ENCODE measurements at regions of chr17 and their contacts with region 1.

Region 1: DNA sequence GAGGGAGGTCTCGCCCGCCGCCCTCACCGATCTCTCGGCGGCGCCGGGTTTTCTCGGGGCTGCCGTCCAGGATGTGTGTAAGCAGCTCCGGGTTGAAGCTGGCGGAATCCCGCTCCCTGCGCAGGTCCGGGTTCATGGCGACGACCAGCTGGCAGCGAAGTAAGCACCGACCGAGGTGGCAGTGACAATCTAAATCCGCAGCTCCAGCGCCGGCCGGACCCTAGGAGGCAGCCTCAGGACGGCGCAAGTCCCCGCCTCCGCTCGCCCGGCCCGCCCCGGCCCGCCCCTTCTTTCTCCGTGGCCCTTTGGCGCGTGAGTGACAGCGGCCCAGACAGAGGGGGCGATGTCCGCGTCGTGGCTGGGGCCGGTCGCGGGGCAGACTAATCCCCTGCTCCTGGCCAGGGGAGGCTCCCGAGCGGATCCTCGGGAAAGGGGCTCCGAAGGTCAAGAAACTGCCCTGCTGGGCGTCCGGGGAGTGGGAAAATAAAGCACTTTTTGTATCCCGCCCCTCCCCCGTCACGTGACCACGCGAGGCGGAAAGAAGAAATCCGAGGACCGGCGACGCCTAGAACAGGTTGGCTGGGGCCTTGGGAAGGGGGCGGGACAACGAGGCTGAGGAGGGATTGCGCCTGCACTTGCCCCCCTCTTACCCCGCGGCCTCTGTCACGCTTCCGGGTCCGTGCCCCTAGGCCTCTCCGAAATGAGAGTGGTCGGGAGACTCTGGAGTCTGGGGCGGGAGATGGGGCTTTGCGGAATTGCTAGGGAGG is at the starts of genes ACOX1 and TEN1:
- DNase-seq: peak; percentile 90 to 98 (median 96)
- ATAC-seq: peak; percentile 97
- H3K4me3 ChIP-seq: peak within 1 kb of the TSS; percentile 85 to 93
- H3K4me3 Mint-ChIP-seq: peak within 1 kb of the TSS; percentile 99
- H3K27ac ChIP-seq: peak within 1 kb of the TSS; percentile 97 to 99
- H3K27ac Mint-ChIP-seq: peak within 1 kb of the TSS; percentile 100
- H3K4me1 ChIP-seq: peaks cover 15% of the 10 kb centered on the region
- H3K4me1 Mint-ChIP-seq: peaks cover 38% of the 10 kb centered on the region
- H3K27me3 ChIP-seq: no peaks in the 10 kb centered on the region
- H3K27me3 Mint-ChIP-seq: no peaks in the 10 kb centered on the region
- CTCF ChIP-seq: no peak
- total RNA-seq, gene ACOX1: 18.2 to 20.4 TPM
- total RNA-seq, gene TEN1: 14.6 to 17.1 TPM

Region 2: GRCh38 chr17:75667021-75667790 is 311.9 kb before region 1 on chr17 and contains the starts of genes RECQL5 and SAP30BP:
- CTCF ChIA-PET with region 1: no interaction called
- POLR2A ChIA-PET with region 1: no interaction called
- intact Hi-C with region 1: loop called in 1 of 2 experiments (anchors 2 kb)
- DNase-seq: peak; percentile 95 to 99 (median 98)
- ATAC-seq: peak; percentile 100
- H3K4me3 ChIP-seq: peak within 1 kb of the TSS; percentile 78 to 85
- H3K4me3 Mint-ChIP-seq: peak within 1 kb of the TSS; percentile 58
- H3K27ac ChIP-seq: peak within 1 kb of the TSS; percentile 88 to 96
- H3K27ac Mint-ChIP-seq: no peak within 1 kb of the TSS
- H3K4me1 ChIP-seq: peaks cover 18% of the 10 kb centered on the region
- H3K4me1 Mint-ChIP-seq: peaks cover 33% of the 10 kb centered on the region
- H3K27me3 ChIP-seq: no peaks in the 10 kb centered on the region
- H3K27me3 Mint-ChIP-seq: no peaks in the 10 kb centered on the region
- CTCF ChIP-seq: no peak
- total RNA-seq, gene RECQL5: 11.2 to 13.2 TPM
- total RNA-seq, gene SAP30BP: 303 to 305 TPM

Region 3: DNA sequence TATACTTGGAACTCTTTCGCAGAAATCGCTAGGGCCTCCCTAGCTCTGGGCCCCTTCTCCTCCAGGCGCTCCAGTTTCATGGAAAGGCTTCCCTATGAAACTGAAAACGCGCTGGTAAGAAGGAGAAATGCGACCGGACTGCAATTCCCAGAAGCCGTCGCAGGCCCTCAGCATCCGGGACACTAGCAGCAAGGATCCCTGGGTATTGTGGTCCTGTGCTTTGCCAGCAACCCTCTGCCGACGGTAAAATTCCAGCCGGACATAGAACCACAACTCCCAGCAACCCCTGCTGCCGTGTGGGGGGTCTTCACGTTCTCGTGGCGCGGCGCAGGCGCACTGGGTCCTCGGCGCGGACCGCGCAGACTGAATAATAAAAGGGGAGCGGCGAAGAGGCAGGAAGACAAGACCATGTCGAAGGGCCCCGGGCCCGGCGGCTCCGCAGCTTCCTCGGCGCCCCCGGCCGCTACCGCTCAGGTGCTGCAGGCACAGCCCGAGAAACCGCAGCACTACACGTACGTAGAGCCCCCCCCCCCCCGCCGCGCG is 194.6 kb before region 1 on chr17 and contains the start of gene UNK:
- CTCF ChIA-PET with region 1: no interaction called
- POLR2A ChIA-PET with region 1: interaction called, 3 read pairs
- intact Hi-C with region 1: loop called (anchors 1 kb)
- DNase-seq: peak; percentile 91 to 99 (median 96)
- ATAC-seq: peak; percentile 64
- H3K4me3 ChIP-seq: peak within 1 kb of the TSS; percentile 57 to 78
- H3K4me3 Mint-ChIP-seq: peak within 1 kb of the TSS; percentile 93
- H3K27ac ChIP-seq: peak within 1 kb of the TSS; percentile 95 to 100
- H3K27ac Mint-ChIP-seq: peak within 1 kb of the TSS; percentile 98
- H3K4me1 ChIP-seq: peaks cover 39% of the 10 kb centered on the region
- H3K4me1 Mint-ChIP-seq: peaks cover 49% of the 10 kb centered on the region
- H3K27me3 ChIP-seq: no peaks in the 10 kb centered on the region
- H3K27me3 Mint-ChIP-seq: no peaks in the 10 kb centered on the region
- CTCF ChIP-seq: no peak
- total RNA-seq, gene UNK: 37.3 to 42.8 TPM

Region 4: GRCh38 chr17:75917141-75917916 is 61.8 kb before region 1 on chr17:
- CTCF ChIA-PET with region 1: no interaction called
- POLR2A ChIA-PET with region 1: no interaction called
- intact Hi-C with region 1: no loop called
- DNase-seq: no peak
- ATAC-seq: no peak
- H3K4me3 ChIP-seq: no peak overlapping the region
- H3K4me3 Mint-ChIP-seq: no peak overlapping the region
- H3K27ac ChIP-seq: no peak overlapping the region
- H3K27ac Mint-ChIP-seq: peak overlapping the region; percentile 74
- H3K4me1 ChIP-seq: no peaks in the 10 kb centered on the region
- H3K4me1 Mint-ChIP-seq: peaks cover 3% of the 10 kb centered on the region
- H3K27me3 ChIP-seq: no peaks in the 10 kb centered on the region
- H3K27me3 Mint-ChIP-seq: no peaks in the 10 kb centered on the region
- CTCF ChIP-seq: no peak

Region 5: GRCh38 chr17:75940724-75941441 is 38.2 kb before region 1 on chr17 and contains the start of gene FBF1:
- CTCF ChIA-PET with region 1: no interaction called
- POLR2A ChIA-PET with region 1: interaction called, 5 read pairs
- intact Hi-C with region 1: loop called (anchors 1 kb)
- DNase-seq: peak; percentile 64 to 92 (median 84)
- ATAC-seq: peak; percentile 99
- H3K4me3 ChIP-seq: peak within 1 kb of the TSS; percentile 61 to 84
- H3K4me3 Mint-ChIP-seq: peak within 1 kb of the TSS; percentile 91
- H3K27ac ChIP-seq: peak within 1 kb of the TSS; percentile 49 to 72
- H3K27ac Mint-ChIP-seq: peak within 1 kb of the TSS; percentile 86
- H3K4me1 ChIP-seq: peaks cover 15% of the 10 kb centered on the region
- H3K4me1 Mint-ChIP-seq: peaks cover 13% of the 10 kb centered on the region
- H3K27me3 ChIP-seq: no peaks in the 10 kb centered on the region
- H3K27me3 Mint-ChIP-seq: no peaks in the 10 kb centered on the region
- CTCF ChIP-seq: no peak
- total RNA-seq, gene FBF1: 18.6 to 21.1 TPM

Region 6: DNA sequence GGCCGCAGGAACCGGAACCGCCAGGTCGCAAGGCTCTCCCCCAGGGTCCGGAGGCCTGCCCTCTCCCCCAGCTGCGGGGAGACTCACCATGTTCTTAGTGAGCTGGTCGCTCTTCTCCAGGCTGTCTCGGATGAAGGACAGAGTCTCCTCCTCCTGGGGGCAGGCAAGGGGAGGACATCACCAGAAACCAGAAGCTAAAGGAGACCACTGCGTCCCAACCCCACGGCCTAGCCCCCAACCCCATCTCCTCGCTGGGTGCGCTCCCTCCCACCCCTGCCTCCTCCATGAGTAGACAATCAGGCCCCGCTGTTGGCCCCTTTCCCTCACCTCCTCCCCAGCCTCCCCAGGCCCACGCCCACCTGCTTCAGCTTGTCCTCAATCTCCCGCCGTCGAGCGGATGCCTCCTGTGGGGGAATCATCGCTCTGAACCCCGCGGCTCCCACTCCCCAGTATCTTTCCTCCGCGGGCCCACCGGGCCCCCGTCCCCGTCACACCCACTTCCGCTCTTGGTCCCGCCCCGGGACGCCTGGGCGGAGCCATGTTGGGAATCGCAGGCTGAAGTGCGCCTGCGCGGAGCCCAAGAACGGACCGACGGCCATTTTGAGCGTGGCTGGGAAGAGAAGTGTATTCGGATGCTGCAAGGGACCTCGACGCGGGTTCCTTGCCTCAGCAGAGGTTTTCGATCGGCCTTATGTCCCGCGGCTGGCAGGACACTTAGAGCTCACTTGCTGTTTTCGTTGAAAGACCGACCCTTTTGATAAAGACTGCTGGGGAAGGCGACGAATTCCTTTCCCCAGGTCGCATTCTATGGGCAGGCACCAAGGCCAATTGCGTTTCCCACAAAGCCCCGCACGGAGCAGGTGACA is 124.4 kb after region 1 on chr17 and contains the start of gene EXOC7:
- CTCF ChIA-PET with region 1: no interaction called
- POLR2A ChIA-PET with region 1: no interaction called
- intact Hi-C with region 1: loop called in 1 of 2 experiments (anchors 1 kb)
- DNase-seq: peak; percentile 83 to 97 (median 93)
- ATAC-seq: peak; percentile 93
- H3K4me3 ChIP-seq: peak within 1 kb of the TSS; percentile 74 to 75
- H3K4me3 Mint-ChIP-seq: peak within 1 kb of the TSS; percentile 98
- H3K27ac ChIP-seq: peak within 1 kb of the TSS; percentile 61 to 77
- H3K27ac Mint-ChIP-seq: peak within 1 kb of the TSS; percentile 95
- H3K4me1 ChIP-seq: peaks cover 21% of the 10 kb centered on the region
- H3K4me1 Mint-ChIP-seq: peaks cover 29% of the 10 kb centered on the region
- H3K27me3 ChIP-seq: no peaks in the 10 kb centered on the region
- H3K27me3 Mint-ChIP-seq: no peaks in the 10 kb centered on the region
- CTCF ChIP-seq: no peak
- total RNA-seq, gene EXOC7: 97.3 to 101 TPM

Region 7: DNA sequence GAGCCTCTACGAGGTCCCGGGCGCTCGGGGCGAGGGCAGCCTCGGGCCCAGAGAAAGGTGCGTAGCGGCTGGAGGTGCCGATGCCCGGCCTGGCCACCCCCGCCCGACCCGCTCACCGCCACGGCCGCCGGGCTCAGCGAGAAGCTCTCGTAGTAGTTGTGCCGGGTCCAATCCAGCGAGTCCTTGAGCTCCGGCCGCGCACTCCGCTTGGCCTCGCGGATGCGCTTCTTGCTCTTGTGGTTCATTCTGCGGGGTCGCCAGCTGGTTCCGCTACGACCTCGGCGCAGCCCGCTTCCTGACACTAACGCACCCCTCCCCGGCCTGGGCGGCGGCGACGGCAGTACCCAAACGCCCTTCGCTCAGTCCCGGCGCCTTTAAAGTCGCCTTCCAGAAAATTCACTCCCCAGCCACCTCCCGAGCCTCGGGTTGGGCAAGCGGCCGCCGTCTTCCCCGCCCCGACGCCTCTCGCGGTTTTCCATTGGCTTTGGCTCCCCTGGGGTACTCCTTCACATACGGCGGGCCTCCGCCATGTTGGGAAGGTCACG is 747.2 kb after region 1 on chr17 and contains the start of gene JMJD6:
- CTCF ChIA-PET with region 1: no interaction called
- POLR2A ChIA-PET with region 1: interaction called, 3 read pairs
- intact Hi-C with region 1: loop called in 1 of 2 experiments (anchors 2 kb)
- DNase-seq: peak in 5 of 9 experiments; percentile 88 to 95 (median 93)
- ATAC-seq: peak; percentile 77
- H3K4me3 ChIP-seq: peak within 1 kb of the TSS; percentile 87 to 92
- H3K4me3 Mint-ChIP-seq: peak within 1 kb of the TSS; percentile 99
- H3K27ac ChIP-seq: peak within 1 kb of the TSS; percentile 98 to 99
- H3K27ac Mint-ChIP-seq: peak within 1 kb of the TSS; percentile 99
- H3K4me1 ChIP-seq: peaks cover 46% of the 10 kb centered on the region
- H3K4me1 Mint-ChIP-seq: peaks cover 57% of the 10 kb centered on the region
- H3K27me3 ChIP-seq: no peaks in the 10 kb centered on the region
- H3K27me3 Mint-ChIP-seq: no peaks in the 10 kb centered on the region
- CTCF ChIP-seq: no peak
- total RNA-seq, gene JMJD6: 316 to 336 TPM

Measured in CD8-positive, alpha-beta T cell (primary cell).